Left ventricle myocardium superior (tissue), 1 donor: ENCODE measurements at regions of chr3 and their contacts with region 1.

Region 1: GRCh38 chr3:191051037-191051436 is 148.0 kb upstream of the OSTN start:
- DNase-seq: no peak
- ATAC-seq: no peak

Region 2: GRCh38 chr3:190701096-190701532 is 349.9 kb before region 1 on chr3:
- intact Hi-C with region 1: loop called (anchors 10 kb)
- DNase-seq: peak; percentile 29
- ATAC-seq: peak; percentile 88

Region 3: GRCh38 chr3:190883973-190884832 is 166.8 kb before region 1 on chr3:
- intact Hi-C with region 1: loop called (anchors 10 kb)
- DNase-seq: no peak
- ATAC-seq: no peak

Region 4: DNA sequence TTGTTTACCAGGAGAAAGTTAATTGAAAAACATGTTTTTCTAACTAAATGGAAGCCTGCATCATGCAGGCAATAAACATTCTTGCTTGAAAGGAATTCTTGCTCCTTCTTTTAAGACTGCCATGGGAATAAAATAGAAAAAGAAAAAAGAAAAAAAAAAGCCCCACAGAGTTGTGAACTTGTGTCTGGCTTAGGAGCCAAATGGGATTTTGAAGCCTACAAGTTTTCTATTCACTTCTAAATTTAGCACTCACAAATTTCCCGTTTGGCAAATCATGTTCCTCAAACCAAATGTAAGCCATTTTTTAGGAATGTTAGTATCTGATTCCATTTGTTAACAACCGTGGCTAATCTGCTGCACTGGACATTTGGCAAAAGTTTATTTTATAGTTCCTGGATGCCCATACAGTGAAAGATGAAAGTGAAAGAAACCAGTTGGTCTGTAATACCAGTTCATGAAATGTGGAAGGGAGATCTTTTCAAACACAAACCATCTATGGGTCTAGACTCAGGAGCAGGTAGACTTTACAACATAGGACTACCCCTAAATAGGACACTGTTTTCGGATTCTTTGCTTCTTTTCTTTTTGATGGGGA is 54.8 kb before region 1 on chr3:
- intact Hi-C with region 1: no loop called
- DNase-seq: no peak
- ATAC-seq: no peak

Region 5: GRCh38 chr3:191762323-191762960 is 711.4 kb after region 1 on chr3:
- intact Hi-C with region 1: no loop called
- DNase-seq: no peak
- ATAC-seq: no peak